Heart left ventricle (tissue), 16 donors: ENCODE measurements at regions of chr1 and their contacts with region 1.

Region 1: GRCh38 chr1:33455539-33456501 is 16.6 kb upstream of the ZSCAN20 start:
- DNase-seq: peak in 4 of 5 donors; percentile 51 to 64 (median 58)
- ATAC-seq: peak; percentile 68 to 89 (median 87)
- H3K4me3 ChIP-seq: no peak overlapping the region
- H3K27ac ChIP-seq: peak overlapping the region in 10 of 12 donors; percentile 11 to 66 (median 43)
- H3K4me1 ChIP-seq: peaks cover 0 to 47% (median 19%) of the 10 kb centered on the region in 12 donors
- H3K27me3 ChIP-seq: no peaks in the 10 kb centered on the region
- CTCF ChIP-seq: peak; percentile 43 to 69 (median 54)
- POLR2A ChIP-seq: no peak

Region 2: DNA sequence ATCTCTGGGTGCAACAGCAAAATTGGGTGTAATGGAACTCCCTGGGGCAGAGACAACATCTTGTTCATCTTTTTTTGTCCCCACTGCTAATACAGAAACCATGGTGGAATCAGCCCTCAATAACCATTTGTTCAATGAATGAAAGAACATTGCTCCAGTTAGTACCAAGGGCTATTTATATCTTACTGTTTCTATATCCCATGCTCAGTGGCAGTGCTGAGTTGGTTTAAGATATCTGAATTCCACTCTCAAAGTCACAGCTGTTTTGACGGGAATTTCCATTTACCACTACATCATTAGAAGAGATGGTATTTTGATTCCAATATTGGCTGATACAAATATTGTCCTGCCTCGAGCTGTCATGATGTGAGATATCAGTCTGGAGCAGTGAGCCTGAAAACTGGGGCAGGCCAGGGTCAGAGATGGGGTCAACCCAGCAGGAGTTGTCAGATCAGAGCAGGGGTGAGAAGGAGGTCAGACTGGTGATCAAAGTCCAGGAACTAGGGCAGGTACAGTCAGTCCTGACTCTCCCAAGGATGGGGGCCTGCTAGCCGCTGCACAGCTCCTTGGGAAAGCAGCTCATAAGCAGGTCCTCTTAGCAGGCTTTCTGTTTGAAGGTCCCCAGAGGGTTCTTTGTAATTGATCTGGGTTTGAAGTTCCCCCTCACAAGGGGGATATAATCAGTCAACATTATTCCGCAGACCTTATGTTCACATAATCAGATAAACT is 19.1 kb before region 1 on chr1:
- intact Hi-C with region 1: loop called in 1 of 10 experiments (anchors 2 kb)
- DNase-seq: no peak
- ATAC-seq: peak in 3 of 4 donors; percentile 32 to 52 (median 47)
- H3K4me3 ChIP-seq: no peak overlapping the region
- H3K27ac ChIP-seq: peak overlapping the region in 4 of 12 donors; percentile 3 to 37 (median 10)
- H3K4me1 ChIP-seq: peaks cover 0 to 45% (median 19%) of the 10 kb centered on the region in 12 donors
- H3K27me3 ChIP-seq: no peaks in the 10 kb centered on the region
- CTCF ChIP-seq: no peak
- POLR2A ChIP-seq: no peak

Region 3: DNA sequence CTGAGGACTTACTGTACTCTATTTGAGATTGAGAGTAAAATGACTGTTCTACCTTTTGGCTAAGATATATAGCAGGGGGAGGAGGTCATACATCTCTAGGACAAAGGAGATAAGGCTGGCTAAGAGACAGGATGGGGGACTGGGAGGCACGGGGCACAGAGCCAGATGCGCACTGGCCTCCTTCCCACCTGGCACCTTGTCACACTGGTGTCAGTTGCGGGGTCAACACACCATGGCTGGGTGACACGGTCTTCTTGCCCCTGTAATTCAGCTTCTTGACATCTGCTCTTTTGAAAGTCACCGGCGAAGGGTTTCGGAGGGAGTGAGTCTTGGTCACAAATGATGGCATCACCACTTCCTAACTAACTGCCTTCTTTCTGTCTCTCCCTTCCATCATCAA is 193.9 kb after region 1 on chr1:
- intact Hi-C with region 1: no loop called
- DNase-seq: peak in 1 of 5 donors; percentile 52
- ATAC-seq: peak in 1 of 4 donors; percentile 41
- H3K4me3 ChIP-seq: no peak overlapping the region
- H3K27ac ChIP-seq: no peak overlapping the region
- H3K4me1 ChIP-seq: no peaks in the 10 kb centered on the region
- H3K27me3 ChIP-seq: peaks cover 0 to under 1% (median 0%) of the 10 kb centered on the region in 9 donors
- CTCF ChIP-seq: no peak
- POLR2A ChIP-seq: no peak